ENCODE measurements at regions of chr6 and their contacts with region 1.

Region 1: GRCh38 chr6:27893059-27893835 is 18.9 kb downstream of the OR2B2 start:
- DNase-seq: peak in 8 of 10 donors; percentile 24 to 93 (median 56)

Region 2: GRCh38 chr6:27188885-27189418 is 704.3 kb before region 1 on chr6:
- intact Hi-C with region 1: loop called (anchors 5 kb)
- DNase-seq: peak in 4 of 10 donors; percentile 23 to 88 (median 34)

Region 3: GRCh38 chr6:27518881-27519795 is 374.1 kb before region 1 on chr6:
- intact Hi-C with region 1: loop called (anchors 10 kb)
- DNase-seq: peak in 9 of 10 donors; percentile 30 to 85 (median 45)

Region 4: DNA sequence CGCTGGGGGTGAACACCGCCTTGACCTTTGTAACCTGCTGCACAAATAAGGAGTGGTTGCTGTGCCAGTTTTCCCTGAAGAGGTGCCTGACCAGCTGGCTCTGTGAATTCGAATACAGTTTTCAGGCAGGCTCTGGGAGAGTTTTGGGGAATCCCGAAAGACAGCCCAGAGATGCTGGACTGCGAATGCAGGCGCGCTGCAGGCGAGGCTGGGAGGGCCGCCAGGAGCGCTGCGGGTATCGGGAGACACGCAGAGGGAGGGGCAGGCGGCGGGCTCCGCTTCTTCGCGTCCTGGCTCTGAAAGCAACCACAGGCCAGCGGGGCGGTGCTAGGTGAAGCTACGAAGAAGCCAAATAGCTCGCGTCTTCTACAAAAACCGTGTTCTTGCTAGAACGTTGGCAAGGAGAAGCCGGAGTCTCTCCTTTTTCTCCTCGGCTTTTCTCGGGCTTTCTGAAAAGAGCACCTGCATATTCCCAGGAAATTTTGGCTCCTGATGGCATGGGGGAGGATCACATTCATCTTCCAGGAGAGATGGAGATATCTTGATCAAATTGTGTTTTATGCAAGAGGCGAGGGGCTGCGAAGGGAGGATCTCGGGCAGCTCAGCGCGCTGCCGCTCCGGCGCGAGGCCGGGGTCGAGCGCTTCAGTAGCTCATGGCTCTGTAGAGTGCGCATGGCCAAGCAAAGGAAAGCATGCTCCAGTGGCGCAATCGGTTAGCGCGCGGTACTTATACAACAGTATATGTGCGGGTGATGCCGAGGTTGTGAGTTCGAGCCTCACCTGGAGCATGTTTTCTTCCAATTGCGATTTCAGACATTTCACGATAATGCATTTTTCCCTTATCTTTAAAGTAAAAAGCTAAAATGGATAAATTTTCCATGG is 262.3 kb before region 1 on chr6:
- intact Hi-C with region 1: no loop called
- DNase-seq: peak; percentile 40 to 96 (median 66)

Region 5: DNA sequence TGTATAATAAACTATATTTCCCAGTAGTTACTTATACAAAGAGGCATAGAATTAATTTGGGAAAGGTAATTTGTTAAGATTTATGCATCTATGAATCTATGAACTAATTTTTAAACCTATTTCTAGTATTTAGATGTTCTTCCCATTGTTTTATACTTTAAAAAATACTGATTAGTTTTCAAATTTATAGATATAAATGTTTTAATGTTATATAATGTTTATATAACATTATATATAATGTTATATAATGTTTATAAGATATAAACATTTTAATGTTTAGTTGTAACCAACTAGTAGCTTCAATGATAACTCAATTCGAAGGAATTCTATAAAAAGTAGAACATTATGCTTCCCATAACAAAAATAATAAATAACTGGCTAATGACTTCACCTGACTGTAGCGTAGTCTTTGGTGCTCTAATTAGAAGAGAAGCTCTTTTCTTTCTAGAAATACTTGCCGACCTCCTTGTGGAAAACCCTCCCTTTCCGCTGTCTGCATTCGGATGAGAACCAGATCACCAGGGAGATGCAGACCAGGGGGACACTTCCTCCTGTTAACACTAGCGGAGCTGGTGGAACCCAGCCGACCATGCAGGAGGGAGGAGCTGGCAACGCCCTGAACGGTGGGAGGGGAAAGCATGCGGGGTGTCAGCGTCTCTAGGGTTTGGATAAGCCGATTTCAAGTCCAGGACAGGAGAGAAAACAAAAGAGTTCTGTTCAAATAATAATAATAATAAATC is 139.4 kb before region 1 on chr6:
- intact Hi-C with region 1: loop called (anchors 5 kb)
- DNase-seq: peak; percentile 39 to 95 (median 56)

Region 6: DNA sequence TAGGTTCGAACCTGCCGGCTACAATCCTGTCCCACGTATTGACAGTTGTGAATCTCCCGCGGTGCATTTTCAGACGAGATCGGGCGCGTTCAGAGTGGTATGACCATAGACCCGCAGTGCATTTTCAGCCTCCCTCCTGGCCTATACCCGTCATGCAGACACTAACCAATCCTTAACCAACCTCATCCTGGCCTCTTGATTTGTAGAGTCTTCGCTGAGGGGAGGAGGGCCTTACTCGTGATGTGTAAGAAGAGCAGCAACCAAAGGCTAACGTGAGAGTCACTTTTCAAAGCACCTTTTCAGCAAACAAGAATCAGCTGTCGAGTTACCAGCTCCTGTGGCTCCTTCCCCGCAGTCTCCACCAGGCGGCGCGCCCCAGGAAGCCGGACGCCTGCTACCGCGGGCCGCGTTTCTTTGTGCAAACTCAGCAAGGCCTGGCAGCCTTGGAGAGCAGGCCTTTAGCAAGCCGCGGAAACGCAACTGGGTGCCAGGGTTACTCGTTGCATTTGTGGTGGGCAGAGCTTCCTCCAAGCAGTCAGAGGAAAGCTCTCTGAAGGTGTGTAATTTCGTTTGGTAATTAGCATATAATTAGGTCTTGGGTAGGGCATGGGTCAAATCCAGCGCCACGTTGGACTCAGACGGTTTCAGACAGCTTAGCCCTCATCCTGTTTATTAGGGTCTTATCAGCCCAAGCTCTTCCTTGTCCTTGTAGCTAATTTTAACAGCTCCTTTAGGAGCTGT is 120.8 kb before region 1 on chr6:
- intact Hi-C with region 1: loop called (anchors 2 kb)
- DNase-seq: peak; percentile 52 to 95 (median 80)

Region 7: GRCh38 chr6:27814660-27815424 is 78.4 kb before region 1 on chr6:
- intact Hi-C with region 1: loop called (anchors 1 kb)
- DNase-seq: peak in 4 of 10 donors; percentile 24 to 83 (median 80)

Region 8: DNA sequence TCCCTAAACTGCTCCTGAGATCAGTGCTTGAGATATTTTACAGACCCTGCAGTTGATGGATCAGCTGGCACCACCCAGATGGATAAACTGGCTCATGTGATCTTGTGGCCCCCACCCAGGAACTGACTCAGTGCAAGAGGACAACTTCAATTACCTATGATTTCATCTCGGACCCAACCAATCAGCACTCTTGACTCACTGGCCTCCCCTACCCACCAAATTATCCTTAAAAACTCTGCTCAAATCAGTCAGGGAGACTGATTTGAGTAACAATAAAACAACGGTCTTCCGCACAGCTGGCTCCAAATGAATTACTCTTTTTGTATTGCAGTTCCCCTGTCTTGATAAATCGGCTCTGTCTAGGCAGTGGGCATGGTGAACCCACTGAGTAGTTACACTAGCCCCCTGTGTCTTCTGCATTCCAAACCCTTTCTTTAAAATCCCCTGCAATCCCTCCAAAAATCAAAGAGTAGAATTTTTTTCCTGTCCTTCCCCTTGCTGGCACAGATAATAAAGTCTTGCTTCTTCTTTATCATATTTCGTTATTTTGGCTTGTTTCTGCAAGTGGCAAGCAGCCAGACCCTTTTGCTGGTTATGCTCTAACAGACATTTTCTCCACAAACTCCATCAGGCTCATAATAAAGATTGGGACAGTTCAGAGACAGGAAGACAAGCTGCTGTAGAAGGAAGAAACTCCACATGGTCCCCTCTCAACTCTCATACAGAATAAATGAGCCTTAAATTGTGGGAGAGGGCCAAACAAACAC is 112.1 kb after region 1 on chr6:
- intact Hi-C with region 1: no loop called
- DNase-seq: no peak

Measured in posterior cingulate gyrus (tissue), 11 donors.